Right lobe of liver (tissue), 6 donors: ENCODE measurements at regions of chr10 and their contacts with region 1.

Region 1: GRCh38 chr10:119199231-119199992 is 8.0 kb upstream of the GRK5 start:
- DNase-seq: peak in 2 of 3 donors; percentile 49 to 69
- ATAC-seq: peak; percentile 96 to 97 (median 96)
- H3K4me3 ChIP-seq: no peak overlapping the region
- H3K27ac ChIP-seq: no peak overlapping the region
- H3K4me1 ChIP-seq: no peaks in the 10 kb centered on the region
- H3K27me3 ChIP-seq: no peaks in the 10 kb centered on the region
- CTCF ChIP-seq: peak; percentile 74 to 86 (median 80)
- POLR2A ChIP-seq: no peak

Region 2: DNA sequence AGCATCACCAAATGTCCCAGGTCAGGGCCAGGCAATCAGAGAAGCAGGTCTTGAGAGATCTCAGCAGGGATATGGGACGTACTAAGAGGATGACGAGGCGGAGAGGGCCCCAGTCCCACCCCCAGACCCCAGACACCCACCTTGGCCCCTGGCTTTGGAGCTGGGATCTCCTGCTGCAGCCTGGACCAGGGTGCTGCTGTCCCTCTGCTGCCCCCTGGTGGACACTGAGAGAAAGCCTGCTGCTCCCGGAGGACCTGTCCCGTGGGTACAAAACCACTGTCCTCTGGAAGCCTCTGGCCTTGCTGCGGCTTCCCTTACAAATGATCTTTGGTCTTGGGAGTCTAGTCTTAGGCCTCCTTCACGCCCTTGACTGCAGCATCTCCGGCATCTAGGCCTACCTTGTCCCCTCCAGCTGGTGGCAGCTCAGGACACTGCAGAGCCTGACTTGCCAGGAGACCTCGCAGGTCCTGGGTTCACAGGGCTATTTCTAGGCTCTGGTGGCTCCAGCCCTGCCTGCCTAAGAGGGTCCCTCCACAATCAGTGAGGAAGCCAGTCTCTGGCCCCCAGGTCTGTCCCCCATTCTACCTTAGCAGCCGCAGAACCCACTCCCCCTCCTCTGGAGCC is 246.0 kb after region 1 on chr10:
- intact Hi-C with region 1: loop called (anchors 10 kb)
- DNase-seq: peak; percentile 85 to 88 (median 87)
- ATAC-seq: peak; percentile 79 to 95 (median 87)
- H3K4me3 ChIP-seq: no peak overlapping the region
- H3K27ac ChIP-seq: no peak overlapping the region
- H3K4me1 ChIP-seq: no peaks in the 10 kb centered on the region
- H3K27me3 ChIP-seq: no peaks in the 10 kb centered on the region
- CTCF ChIP-seq: peak; percentile 84 to 96 (median 94)
- POLR2A ChIP-seq: no peak